Psoas muscle (tissue), 8 donors: ENCODE measurements at regions of chr16 and their contacts with region 1.

Region 1: DNA sequence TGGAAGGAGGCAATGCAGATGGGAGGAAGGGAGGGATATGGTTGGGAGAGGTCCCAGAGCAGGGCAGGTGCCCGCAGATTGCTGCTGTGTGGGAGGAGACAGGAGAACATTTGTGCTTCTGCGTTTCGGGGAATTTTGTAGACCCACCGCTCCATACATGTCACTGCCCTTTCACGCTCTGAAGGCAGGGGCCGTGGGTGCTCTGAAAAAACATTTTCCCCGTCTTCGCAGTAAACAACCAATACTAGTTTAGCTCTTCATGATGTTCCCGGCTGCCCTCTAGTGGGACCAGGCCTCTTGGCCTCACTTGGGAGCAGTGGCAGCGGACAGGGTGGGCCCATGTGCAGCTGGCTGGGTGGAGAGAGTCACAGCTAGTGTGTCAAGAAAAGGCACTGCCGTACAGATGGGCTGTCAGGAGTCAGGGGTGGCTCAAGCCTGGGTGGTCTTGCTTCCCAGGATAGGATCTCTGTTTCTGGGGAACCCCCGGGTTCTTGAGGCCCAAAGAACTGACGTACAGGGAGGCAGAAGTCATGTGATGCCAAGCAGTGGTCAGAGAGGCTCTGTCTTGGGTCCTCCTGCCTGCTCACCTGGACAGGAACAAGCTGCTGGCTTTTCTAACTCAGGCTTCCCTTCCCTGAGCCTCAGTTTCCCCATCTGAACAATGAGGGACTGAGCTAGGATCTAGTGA is 46.5 kb upstream of the CPNE2 start:
- DNase-seq: peak; percentile 75 to 82
- ATAC-seq: peak; percentile 80 to 92 (median 82)
- H3K4me3 ChIP-seq: peak overlapping the region; percentile 38
- H3K27ac ChIP-seq: no peak overlapping the region
- H3K4me1 ChIP-seq: no peaks in the 10 kb centered on the region
- H3K27me3 ChIP-seq: no peaks in the 10 kb centered on the region
- CTCF ChIP-seq: peak; percentile 59

Region 2: DNA sequence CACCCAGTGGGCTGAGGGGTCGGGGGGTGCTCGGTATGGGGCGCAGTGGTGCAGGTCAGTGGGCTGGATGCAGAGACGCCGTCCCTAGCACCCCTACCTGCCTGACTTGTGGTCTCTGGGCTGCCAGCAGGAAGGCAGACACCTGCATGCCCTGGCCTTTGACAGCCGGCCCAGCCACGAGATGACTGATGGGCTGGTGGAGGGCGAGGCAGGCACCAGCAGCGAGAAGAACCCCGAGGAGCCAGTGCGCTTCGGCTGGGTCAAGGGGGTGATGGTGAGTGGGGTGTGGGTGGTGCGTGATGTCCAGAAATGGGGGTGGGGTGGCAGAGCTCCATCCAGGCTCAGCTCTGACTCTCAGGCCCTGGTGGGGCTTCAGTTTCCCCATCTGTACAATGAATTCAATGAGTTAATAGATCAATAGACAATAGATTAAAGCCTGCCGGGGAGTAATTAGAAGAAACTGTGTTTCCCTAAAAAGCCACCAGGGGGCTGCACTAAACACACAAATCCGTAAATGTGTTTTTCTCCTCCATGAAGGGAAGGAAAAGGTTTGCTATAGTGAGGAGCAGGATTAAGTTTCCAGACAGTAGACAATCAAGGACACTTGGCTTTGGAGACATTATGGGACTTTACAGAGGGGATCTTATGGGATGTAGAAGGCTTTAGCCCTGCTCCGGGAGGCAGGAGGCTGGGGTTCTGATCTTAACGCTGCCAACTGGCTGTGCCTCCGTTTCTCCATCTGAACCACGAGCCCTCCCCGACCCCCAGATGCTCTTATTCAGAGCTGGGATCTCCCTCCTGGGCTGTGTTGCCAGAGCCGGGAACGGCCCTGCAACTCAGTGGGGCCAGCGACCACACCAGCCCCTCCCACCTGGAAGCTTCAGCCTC is 178.7 kb before region 1 on chr16:
- intact Hi-C with region 1: loop called (anchors 2 to 5 kb)
- DNase-seq: no peak
- ATAC-seq: peak; percentile 55 to 77 (median 59)
- H3K4me3 ChIP-seq: no peak overlapping the region
- H3K27ac ChIP-seq: no peak overlapping the region
- H3K4me1 ChIP-seq: peaks cover 6% of the 10 kb centered on the region
- H3K27me3 ChIP-seq: no peaks in the 10 kb centered on the region
- CTCF ChIP-seq: peak; percentile 77

Region 3: DNA sequence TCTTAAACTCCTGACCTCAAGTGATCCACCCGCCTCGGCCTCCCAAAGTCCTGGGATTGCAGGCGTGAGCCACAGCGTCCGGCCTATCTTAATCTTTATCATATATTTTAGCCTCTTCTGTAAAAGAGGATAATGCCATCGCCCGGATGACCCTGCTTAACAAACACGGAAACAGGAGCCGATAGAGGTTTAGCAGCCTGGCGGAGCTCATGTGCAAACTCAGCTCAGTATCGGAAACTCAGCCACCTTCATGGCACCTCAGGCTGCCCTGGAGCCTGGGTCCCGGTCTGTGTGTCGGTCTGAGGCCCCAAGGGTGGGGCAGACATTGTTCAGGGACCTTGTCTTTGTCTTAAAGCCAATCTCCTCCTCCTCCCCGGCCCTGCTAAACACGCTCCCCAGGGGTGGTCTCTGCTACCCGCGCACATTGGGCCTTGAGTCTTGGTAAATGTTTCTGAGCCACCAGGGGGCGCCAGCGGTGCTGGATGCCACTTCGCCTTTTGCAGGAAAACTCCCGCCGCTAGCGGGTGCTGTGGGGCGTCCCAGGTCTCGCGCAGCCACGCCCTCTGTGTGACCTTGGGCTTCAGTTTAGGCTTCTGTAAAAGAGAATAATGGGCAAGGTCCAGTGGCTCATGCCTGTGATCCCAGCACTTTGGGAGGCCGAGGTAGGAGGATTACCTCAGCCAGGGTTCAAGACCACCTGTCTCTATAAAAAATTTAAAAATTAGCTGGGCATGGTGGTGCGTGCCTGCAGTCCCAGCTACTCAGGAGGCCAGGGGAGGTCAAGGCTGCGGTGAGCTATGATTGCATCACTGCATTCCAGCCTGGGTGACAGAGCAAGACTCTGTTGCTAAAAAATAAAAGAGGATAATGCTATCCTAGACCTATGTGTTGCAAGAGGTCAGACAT is 81.3 kb before region 1 on chr16:
- intact Hi-C with region 1: loop called in 1 of 2 experiments (anchors 2 kb)
- DNase-seq: peak; percentile 87 to 90
- ATAC-seq: peak; percentile 34 to 80 (median 72)
- H3K4me3 ChIP-seq: no peak overlapping the region
- H3K27ac ChIP-seq: no peak overlapping the region
- H3K4me1 ChIP-seq: peaks cover 5% of the 10 kb centered on the region
- H3K27me3 ChIP-seq: no peaks in the 10 kb centered on the region
- CTCF ChIP-seq: peak; percentile 70

Region 4: DNA sequence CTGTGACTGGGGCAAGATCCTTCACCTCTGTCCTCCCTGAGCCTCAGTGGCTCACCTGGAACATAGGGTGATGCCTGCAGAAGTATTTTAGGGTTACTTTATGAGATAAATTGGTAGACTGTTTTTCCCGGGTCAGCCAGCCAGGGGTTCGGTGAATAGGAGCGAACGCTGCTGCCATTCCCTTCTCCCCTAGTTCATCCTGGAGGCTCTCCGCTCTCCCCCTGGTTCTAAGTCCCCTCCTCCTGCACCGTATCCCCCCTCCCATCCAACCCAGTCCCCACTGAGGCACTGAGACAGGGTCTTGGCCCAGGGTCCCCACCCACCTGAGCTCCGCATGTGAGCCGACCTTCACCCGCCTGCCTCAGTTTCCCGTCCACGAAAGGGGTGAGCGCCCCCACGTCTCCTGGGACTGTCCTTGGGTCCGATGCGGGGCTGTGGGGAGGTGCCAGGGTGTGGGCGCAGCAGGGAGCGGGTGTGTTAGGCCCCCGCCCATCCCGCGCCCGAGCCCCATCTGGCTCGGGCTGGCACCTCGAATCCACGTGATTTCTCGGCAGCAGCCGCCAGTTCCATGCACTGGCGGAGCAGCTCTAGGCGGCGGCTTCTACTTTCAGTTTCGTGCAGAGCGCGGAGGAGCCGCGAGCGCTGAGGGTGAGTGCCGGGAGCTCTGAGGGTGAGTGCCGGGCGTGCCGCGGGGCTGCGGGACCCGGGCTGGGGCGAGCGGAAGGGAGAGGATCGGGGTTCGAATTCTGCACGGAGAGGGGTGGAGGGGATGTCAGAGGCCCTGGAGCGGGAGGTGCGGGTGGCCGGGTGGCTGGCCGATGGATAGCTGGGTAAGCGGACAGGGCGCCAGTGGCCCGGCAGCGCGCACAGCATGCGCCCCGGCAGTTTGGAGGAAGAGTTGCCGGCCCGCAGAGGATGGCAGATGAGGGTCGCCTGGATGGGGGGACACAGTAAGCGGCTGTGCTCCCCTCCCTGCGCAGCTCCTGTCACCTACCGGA is 56.6 kb before region 1 on chr16 and contains the start of gene NLRC5:
- intact Hi-C with region 1: loop called in 1 of 2 experiments (anchors 5 kb)
- DNase-seq: peak; percentile 84 to 88
- ATAC-seq: peak; percentile 84 to 92 (median 86)
- H3K4me3 ChIP-seq: peak within 1 kb of the TSS; percentile 80
- H3K27ac ChIP-seq: peak within 1 kb of the TSS; percentile 68
- H3K4me1 ChIP-seq: peaks cover 5% of the 10 kb centered on the region
- H3K27me3 ChIP-seq: no peaks in the 10 kb centered on the region
- CTCF ChIP-seq: no peak
- total RNA-seq, gene NLRC5: 6.4 to 13.6 (median 7.8) TPM

Region 5: DNA sequence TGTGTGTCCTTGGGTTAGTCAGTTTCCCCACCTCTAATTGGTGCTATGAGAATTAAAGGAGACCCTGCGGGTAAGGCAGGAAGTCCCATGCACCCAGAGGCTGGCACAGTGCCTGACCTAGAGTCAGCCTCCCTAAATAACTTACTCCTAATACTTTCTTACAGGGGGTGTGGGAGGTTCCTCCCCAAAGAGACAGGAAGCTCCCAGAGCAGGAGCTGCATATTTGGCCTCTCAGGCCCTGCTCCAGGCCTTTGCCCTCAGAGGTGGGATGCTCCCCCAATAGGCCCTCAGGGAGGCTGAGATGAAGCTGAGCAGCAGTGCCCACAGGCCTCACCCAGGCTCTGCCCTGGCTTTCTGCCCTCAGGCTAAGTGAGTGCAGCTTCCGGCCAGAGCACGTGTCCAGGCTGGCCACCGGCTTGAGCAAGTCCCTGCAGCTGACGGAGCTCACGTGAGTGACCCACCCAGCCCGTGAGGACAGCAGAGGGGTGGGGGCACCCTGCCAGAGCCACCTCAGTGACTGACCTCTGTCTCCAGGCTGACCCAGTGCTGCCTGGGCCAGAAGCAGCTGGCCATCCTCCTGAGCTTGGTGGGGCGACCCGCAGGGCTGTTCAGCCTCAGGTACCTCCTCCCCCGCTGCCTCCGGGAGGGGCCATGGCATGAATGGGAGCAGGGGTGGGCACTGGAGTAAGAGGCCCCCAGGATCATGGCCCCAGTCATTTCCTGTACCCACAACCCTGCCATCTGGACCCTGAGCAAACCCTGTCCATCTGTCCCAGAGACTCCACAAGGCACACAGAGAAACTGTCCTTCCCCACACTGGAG is 15.5 kb after region 1 on chr16:
- intact Hi-C with region 1: loop called in 1 of 2 experiments (anchors 2 kb)
- DNase-seq: peak; percentile 89 to 95
- ATAC-seq: peak; percentile 90 to 97 (median 94)
- H3K4me3 ChIP-seq: peak overlapping the region; percentile 31
- H3K27ac ChIP-seq: peak overlapping the region; percentile 74
- H3K4me1 ChIP-seq: peaks cover 23% of the 10 kb centered on the region
- H3K27me3 ChIP-seq: no peaks in the 10 kb centered on the region
- CTCF ChIP-seq: no peak

Region 6: GRCh38 chr16:57071831-57072582 is 26.2 kb after region 1 on chr16:
- intact Hi-C with region 1: loop called in 1 of 2 experiments (anchors 2 kb)
- DNase-seq: no peak
- ATAC-seq: peak; percentile 34 to 72 (median 56)
- H3K4me3 ChIP-seq: no peak overlapping the region
- H3K27ac ChIP-seq: peak overlapping the region; percentile 10
- H3K4me1 ChIP-seq: peaks cover 7% of the 10 kb centered on the region
- H3K27me3 ChIP-seq: no peaks in the 10 kb centered on the region
- CTCF ChIP-seq: no peak